Activated B cell treated with CpG ODN at 0.5 μM for 24 hours (primary cell): ENCODE measurements at regions of chr11 and their contacts with region 1.

Region 1: DNA sequence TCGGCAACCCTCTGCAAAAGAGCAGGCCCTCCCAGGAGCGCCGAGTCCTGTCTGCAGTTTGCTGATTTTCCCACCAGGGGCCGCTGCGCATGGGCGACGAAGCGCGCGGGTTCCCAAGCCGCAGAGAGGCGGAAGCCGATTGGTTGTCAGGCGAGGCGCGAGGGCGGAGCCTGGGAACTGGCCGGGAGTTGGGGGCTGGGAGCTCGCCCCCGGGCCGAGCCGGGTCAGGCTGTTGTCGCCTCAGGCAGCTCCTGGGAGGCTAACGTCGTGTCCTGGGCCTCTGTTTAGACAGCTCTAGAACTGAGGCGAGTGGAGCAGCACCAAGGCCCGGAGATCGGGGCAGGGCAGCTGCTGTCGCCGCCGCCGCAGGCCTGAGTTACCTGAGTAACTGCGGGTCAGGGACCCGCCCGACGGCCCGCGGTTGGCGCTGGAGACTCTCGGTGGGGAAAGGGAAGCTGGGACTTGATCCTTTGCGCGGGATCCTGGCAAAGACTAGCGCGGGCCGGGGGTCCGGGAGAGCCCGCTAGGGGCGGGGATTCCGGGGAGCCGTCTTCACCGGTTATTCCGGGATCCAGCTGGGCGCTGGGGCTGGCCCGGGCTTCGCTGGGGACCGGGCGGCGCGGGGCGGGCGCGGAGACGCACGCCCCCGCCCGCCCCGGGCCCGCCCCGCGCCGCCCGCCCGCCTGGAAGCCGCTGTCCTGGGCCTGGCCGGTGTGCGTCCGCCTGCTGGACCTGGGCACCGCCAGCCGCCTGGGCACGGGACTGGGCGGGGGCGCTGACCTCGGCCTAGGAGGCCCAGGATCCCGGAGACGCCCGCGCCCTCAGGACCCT is at the start of gene STIM1:
- DNase-seq: peak; percentile 96
- ATAC-seq: peak; percentile 74
- H3K4me3 Mint-ChIP-seq: peak within 1 kb of the TSS; percentile 96
- H3K27ac Mint-ChIP-seq: peak within 1 kb of the TSS; percentile 99
- H3K4me1 Mint-ChIP-seq: peaks cover 63% of the 10 kb centered on the region
- H3K27me3 Mint-ChIP-seq: no peaks in the 10 kb centered on the region
- CTCF ChIP-seq: peak; percentile 58
- total RNA-seq, gene STIM1: 37.3 and 38.4 TPM in 2 replicates

Region 2: DNA sequence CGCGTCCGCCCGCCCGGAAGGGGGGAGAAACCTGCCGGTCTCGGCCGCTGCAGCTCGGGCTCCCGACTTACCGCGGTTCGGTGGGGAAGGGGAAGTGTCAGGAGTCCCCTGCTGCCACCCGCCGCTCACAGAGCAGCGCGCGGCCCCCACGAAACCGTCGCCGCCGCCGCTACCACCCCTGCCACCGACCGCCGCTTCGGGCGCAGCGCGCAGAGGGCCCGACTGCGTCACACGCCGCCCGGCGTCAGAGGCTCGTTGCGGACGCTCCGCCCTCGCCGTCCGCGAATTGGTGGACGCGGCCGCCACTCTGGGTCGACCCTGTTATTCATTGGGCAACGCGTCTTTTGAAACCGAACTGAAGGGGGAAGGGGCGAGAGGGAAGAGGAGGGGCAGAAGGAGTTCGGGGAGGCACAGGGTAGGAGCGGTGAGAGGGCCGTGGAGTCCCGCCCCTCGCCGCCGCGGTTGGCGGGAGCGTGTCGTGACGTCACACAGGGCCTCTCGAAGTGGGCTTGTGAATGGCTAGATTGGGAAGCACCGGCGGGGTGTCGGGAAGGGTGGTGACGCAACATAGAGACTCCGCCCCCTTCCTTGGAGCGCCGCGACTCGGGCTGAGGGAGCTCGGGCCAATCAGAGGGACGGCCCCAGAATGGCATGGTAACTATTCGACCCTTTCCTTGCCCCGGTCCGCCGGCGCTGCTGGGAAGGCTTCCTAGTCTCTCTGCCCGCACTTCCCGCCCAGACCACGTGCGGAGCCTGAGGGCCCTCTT is 57.7 kb before region 1 on chr11 and contains the start of gene NUP98:
- CTCF ChIA-PET with region 1: interaction called, 5 read pairs
- POLR2A ChIA-PET with region 1: interaction called, 17 read pairs
- intact Hi-C with region 1: loop called (anchors 1 kb)
- DNase-seq: peak; percentile 99
- ATAC-seq: peak; percentile 93
- H3K4me3 Mint-ChIP-seq: peak within 1 kb of the TSS; percentile 98
- H3K27ac Mint-ChIP-seq: peak within 1 kb of the TSS; percentile 99
- H3K4me1 Mint-ChIP-seq: peaks cover 43% of the 10 kb centered on the region
- H3K27me3 Mint-ChIP-seq: no peaks in the 10 kb centered on the region
- CTCF ChIP-seq: no peak
- total RNA-seq, gene NUP98: 98.0 and 117 TPM in 2 replicates

Region 3: DNA sequence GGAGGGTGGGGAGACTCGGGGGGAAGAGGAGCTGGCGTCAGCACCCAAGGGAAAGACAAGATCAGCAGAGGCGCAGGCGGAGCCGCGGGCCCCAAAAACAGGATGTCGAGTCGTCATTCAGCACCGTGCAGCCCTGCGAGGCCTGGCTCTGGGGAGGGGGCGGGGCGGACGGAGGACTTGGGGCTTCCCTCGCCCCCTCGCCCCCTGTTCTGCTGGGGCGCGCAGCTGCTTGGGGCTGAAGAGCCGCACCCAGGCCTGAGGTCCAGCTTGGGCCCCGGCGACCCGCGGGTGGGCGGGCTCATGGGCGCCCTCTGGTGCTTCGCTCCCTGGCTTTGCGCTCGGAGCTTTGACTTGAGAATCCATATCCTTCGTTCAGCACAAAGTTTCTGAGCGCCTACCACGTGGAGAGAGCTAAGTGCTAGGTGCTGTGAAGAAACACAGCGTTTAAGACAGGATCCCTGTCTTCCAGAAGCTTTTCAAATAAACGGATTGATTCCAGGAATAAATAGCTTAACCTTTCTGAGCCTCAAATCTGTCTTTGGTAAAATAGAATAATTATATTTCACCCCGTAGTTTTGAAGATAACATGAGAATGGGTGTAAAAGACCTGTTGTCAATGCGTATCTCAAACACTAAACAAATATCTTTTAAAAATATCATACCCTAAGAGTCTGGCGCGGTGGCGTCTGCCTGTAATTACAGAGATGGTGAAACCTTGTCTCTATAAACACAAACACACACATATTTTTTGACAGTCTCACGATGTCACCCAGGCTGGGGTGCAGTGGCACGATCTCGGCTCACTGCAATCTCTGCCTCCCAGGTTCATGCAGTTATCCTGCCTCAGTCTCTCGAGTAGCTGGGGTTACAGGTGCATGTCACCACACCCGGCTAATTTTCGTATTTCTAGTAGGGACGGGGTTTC is 13.5 kb before region 1 on chr11:
- CTCF ChIA-PET with region 1: interaction called, 156 read pairs
- POLR2A ChIA-PET with region 1: interaction called, 352 read pairs
- intact Hi-C with region 1: loop called (anchors 1 kb)
- DNase-seq: peak; percentile 96
- ATAC-seq: no peak
- H3K4me3 Mint-ChIP-seq: peak overlapping the region; percentile 91
- H3K27ac Mint-ChIP-seq: peak overlapping the region; percentile 95
- H3K4me1 Mint-ChIP-seq: peaks cover 46% of the 10 kb centered on the region
- H3K27me3 Mint-ChIP-seq: no peaks in the 10 kb centered on the region
- CTCF ChIP-seq: no peak

Region 4: GRCh38 chr11:3885855-3886254 is 30.7 kb after region 1 on chr11:
- CTCF ChIA-PET with region 1: interaction called, 22 read pairs
- POLR2A ChIA-PET with region 1: interaction called, 43 read pairs
- intact Hi-C with region 1: no loop called
- DNase-seq: no peak
- ATAC-seq: no peak
- H3K4me3 Mint-ChIP-seq: no peak overlapping the region
- H3K27ac Mint-ChIP-seq: no peak overlapping the region
- H3K4me1 Mint-ChIP-seq: peaks cover 81% of the 10 kb centered on the region
- H3K27me3 Mint-ChIP-seq: no peaks in the 10 kb centered on the region
- CTCF ChIP-seq: no peak

Region 5: GRCh38 chr11:3947061-3947460 is 91.9 kb after region 1 on chr11:
- CTCF ChIA-PET with region 1: interaction called, 22 read pairs
- POLR2A ChIA-PET with region 1: interaction called, 29 read pairs
- intact Hi-C with region 1: loop called (anchors 2 kb)
- DNase-seq: no peak
- ATAC-seq: peak; percentile 59
- H3K4me3 Mint-ChIP-seq: peak overlapping the region; percentile 13
- H3K27ac Mint-ChIP-seq: peak overlapping the region; percentile 70
- H3K4me1 Mint-ChIP-seq: peaks cover 92% of the 10 kb centered on the region
- H3K27me3 Mint-ChIP-seq: no peaks in the 10 kb centered on the region
- CTCF ChIP-seq: no peak

Region 6: DNA sequence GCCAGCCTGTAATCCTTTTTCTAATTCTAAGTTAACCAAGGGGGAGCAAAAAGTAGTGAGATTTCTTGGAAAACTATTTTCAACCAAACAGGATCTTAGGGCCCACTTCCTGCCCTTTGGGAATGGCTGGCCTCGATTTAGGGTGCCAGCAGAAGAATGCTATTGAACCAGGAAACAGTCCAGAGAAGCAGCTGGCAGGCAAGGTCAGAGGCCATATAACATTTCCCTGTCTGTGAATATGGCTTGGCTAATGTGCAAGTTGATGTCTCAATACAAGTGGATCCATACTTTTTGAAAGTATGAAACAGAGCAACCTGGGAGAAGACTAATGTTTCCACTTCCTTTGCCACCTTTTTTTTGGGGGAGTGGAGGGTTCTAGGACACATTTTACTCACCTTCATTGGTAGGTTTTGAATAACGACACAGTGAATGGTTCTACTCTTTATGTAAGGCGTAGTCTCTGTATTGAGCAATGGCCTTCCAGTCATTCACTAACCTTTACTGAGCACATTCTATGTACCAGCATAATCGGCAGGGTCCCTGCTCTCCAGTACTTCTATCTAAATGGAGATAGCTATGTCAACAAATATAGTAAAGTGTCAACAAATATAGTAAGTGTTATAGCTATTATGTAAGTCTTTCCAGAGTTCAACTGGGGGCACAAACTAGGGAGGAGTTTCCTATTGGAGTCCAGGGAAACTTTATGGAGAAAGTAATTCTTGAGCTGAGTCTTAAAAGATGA is 205.2 kb after region 1 on chr11:
- CTCF ChIA-PET with region 1: interaction called, 526 read pairs
- POLR2A ChIA-PET with region 1: interaction called, 50 read pairs
- intact Hi-C with region 1: loop called (anchors 1 kb)
- DNase-seq: no peak
- ATAC-seq: no peak
- H3K4me3 Mint-ChIP-seq: no peak overlapping the region
- H3K27ac Mint-ChIP-seq: no peak overlapping the region
- H3K4me1 Mint-ChIP-seq: peaks cover 27% of the 10 kb centered on the region
- H3K27me3 Mint-ChIP-seq: no peaks in the 10 kb centered on the region
- CTCF ChIP-seq: no peak